CD4-positive, alpha-beta memory T cell (primary cell): ENCODE measurements at regions of chr22 and their contacts with region 1.

Region 1: DNA sequence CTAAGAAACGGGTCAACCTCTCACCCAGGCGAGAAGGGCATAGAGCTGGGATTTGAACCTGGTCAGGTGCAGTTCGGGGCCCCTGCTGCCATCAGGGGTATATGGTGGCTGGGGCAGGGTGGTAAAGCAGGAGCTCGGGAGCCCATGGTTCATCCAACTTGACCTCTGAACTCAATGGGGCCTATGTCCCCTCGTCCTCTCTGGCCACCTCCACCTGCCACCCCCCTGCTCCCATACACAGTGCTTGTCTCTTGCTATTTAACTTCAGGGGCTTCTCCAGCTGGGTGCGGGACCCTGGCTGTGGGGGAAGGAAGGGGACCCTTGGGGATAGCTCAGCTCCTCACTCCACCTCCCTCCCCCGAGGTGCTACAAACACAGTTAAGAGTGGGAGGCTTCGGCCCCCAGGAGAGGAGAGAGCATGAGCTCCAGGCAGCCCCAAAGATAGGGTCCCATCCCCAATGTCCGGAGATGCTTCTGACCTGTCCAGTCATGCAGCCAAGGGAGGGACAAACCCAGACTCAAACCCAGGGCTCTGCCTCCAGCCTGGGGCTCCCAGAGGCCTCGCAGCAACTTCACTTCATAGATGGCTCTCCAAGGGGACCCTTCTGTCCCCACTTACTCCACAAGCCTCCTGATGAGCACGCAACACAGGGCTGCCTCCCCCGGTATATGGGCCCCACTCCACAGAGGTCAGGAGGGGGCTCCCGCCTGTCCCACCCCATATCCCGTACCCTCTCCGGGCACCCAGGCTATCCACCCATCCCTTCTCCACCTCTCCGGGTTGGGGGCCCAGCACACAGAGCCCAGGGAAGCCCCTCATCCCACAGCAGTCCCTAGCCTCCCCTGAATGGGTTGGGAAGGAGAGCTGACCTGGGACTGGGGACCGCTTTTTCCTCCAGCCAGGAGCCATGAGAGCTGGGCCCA is 712 bp downstream of the IL2RB start:
- DNase-seq: peak in 1 of 5 donors; percentile 44
- H3K4me3 ChIP-seq: peak overlapping the region; percentile 72
- H3K4me3 Mint-ChIP-seq: peak overlapping the region; percentile 88 to 96 (median 92)
- H3K27ac ChIP-seq: peak overlapping the region; percentile 95
- H3K27ac Mint-ChIP-seq: peak overlapping the region; percentile 96 to 100 (median 98)
- H3K4me1 ChIP-seq: peaks cover 63% of the 10 kb centered on the region
- H3K4me1 Mint-ChIP-seq: peaks cover 43 to 74% (median 58%) of the 10 kb centered on the region in 4 donors
- H3K27me3 ChIP-seq: no peaks in the 10 kb centered on the region
- H3K27me3 Mint-ChIP-seq: peaks cover 0 to 4% of the 10 kb centered on the region in 2 donors

Region 2: DNA sequence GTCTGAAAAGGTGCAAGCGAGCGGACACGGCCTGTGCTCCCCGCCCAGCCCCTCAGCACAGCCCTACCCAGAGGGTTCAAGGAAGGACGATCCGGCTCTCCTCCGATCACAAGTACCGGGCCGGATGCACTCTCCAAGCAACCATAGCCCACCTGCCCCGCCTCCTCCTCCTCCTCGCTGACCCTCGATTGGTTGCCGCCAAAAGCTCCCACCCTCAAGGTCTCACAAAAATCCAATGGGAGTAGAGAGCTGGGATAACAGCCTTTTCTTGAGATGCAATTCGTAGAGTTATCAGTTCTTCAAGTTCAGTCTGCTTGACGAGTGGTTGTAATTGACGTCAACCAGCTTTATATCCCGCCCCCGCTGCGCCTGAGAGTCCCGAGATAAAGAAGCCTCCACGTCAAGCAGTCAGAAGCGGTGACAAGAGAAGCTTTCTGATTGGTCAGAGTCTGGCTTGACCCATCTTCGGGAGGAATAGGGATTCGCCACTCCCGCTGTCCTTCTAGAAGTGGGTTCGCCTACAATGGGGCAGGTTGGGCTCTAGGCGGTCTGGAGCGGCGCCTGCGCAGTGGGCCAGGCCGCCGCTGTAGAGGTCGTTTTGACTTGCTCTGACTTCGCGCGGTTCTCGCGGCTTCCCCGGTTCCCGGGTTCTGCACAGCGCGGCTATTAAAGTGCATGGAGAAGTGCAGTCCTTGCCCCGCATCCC is 372.9 kb before region 1 on chr22 and contains the start of gene IFT27:
- CTCF ChIA-PET with region 1: no interaction called
- POLR2A ChIA-PET with region 1: interaction called, 20 read pairs
- intact Hi-C with region 1: no loop called
- DNase-seq: peak; percentile 96 to 100 (median 99)
- H3K4me3 ChIP-seq: peak within 1 kb of the TSS; percentile 51 to 64
- H3K4me3 Mint-ChIP-seq: peak within 1 kb of the TSS; percentile 89 to 97 (median 92)
- H3K27ac ChIP-seq: peak within 1 kb of the TSS; percentile 73
- H3K27ac Mint-ChIP-seq: peak within 1 kb of the TSS; percentile 93 to 99 (median 98)
- H3K4me1 ChIP-seq: peaks cover 17% of the 10 kb centered on the region
- H3K4me1 Mint-ChIP-seq: peaks cover 16 to 32% (median 24%) of the 10 kb centered on the region in 4 donors
- H3K27me3 ChIP-seq: no peaks in the 10 kb centered on the region
- H3K27me3 Mint-ChIP-seq: no peaks in the 10 kb centered on the region
- total RNA-seq, gene IFT27: 38.2 to 42.6 TPM

Region 3: GRCh38 chr22:37098976-37099591 is 49.9 kb before region 1 on chr22:
- CTCF ChIA-PET with region 1: no interaction called
- POLR2A ChIA-PET with region 1: no interaction called
- intact Hi-C with region 1: loop called (anchors 1 kb)
- DNase-seq: no peak
- H3K4me3 ChIP-seq: no peak overlapping the region
- H3K4me3 Mint-ChIP-seq: no peak overlapping the region
- H3K27ac ChIP-seq: no peak overlapping the region
- H3K27ac Mint-ChIP-seq: peak overlapping the region in 3 of 7 donors; percentile 50 to 73 (median 61)
- H3K4me1 ChIP-seq: no peaks in the 10 kb centered on the region
- H3K4me1 Mint-ChIP-seq: peaks cover 8 to 12% (median 10%) of the 10 kb centered on the region in 4 donors
- H3K27me3 ChIP-seq: no peaks in the 10 kb centered on the region
- H3K27me3 Mint-ChIP-seq: peaks cover 7 to 8% of the 10 kb centered on the region in 2 donors

Region 4: DNA sequence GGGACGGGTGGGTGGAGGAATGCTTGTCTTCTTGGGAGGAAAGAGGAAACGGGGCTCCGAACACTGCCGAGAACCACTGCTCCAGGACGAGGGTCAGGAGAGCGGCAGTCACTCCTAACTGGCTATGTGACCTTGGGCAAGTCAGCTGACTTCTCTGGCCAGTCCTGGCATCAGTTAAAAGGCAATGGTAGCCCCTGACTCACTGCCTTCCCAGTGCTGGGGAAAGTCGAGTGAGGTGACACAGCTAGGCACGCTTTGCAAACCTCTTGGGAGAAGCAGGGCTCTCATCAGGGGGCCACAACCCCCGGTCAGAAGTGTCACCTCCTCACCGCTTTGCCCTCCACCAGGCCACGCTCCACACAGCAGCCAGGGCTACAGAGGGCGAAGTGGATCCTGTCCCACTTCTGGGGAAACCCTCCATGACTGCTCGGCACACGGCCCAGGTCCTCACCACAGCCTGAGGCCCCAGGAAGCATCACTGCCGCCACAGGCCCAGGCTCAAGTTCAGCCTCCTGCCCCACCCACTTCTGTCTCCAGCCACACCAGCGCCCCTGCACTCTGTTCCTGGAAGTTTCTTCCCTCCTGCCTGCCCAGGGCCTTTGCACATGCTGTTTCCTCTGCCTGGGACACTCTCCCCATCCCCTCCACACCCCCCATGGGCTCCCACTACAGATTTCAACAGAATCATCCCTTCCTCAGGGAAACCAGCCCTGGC is 15.5 kb before region 1 on chr22:
- CTCF ChIA-PET with region 1: interaction called, 3 read pairs
- POLR2A ChIA-PET with region 1: interaction called, 13 read pairs
- intact Hi-C with region 1: no loop called
- DNase-seq: no peak
- H3K4me3 ChIP-seq: no peak overlapping the region
- H3K4me3 Mint-ChIP-seq: no peak overlapping the region
- H3K27ac ChIP-seq: peak overlapping the region; percentile 1
- H3K27ac Mint-ChIP-seq: peak overlapping the region in 6 of 7 donors; percentile 48 to 87 (median 77)
- H3K4me1 ChIP-seq: no peaks in the 10 kb centered on the region
- H3K4me1 Mint-ChIP-seq: peaks cover 0 to 13% (median 6%) of the 10 kb centered on the region in 4 donors
- H3K27me3 ChIP-seq: no peaks in the 10 kb centered on the region
- H3K27me3 Mint-ChIP-seq: no peaks in the 10 kb centered on the region

Region 5: DNA sequence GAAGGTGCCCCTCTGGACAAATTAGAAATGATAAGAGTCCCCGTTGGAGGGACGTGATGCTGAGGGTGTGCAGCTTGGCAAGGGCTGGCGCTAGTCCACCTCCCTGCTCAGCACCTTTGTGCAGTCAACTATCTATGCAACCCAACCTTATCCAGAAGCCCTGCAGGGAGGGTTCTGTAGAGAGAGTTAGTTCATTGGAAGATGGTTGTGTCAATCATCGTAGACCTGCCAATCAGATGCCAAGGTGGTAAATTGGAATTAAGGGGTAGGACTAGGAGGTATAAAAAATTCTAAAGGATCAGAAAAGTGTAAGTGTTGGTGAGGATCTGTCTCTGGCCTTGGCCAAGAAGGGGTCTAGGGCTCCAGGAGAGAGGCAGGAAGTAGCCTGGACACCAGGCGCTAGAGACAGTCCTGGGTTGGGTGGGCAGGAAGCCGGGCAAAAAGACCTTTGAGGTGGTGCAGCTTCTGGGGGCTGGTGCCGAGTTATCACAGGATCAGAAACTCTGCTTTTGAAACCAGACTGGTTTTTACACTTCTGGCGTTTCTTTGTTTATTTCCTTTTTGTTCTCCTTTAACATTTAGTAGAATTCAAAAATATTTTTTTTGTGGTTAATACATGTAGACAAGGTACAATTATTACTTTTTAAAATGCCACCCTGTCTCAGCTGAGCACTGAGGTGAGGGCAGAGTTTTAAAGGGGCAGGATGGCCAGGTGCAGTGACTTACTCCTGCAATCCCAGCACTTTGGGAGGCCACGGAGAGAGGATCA is 37.4 kb after region 1 on chr22:
- CTCF ChIA-PET with region 1: interaction called, 3 read pairs
- POLR2A ChIA-PET with region 1: interaction called, 15 read pairs
- intact Hi-C with region 1: no loop called
- DNase-seq: peak; percentile 68 to 79 (median 76)
- H3K4me3 ChIP-seq: peak overlapping the region in 1 of 2 donors; percentile 1
- H3K4me3 Mint-ChIP-seq: peak overlapping the region; percentile 74 to 87 (median 80)
- H3K27ac ChIP-seq: peak overlapping the region; percentile 31
- H3K27ac Mint-ChIP-seq: peak overlapping the region; percentile 73 to 95 (median 85)
- H3K4me1 ChIP-seq: peaks cover 61% of the 10 kb centered on the region
- H3K4me1 Mint-ChIP-seq: peaks cover 24 to 56% (median 40%) of the 10 kb centered on the region in 4 donors
- H3K27me3 ChIP-seq: no peaks in the 10 kb centered on the region
- H3K27me3 Mint-ChIP-seq: no peaks in the 10 kb centered on the region

Region 6: DNA sequence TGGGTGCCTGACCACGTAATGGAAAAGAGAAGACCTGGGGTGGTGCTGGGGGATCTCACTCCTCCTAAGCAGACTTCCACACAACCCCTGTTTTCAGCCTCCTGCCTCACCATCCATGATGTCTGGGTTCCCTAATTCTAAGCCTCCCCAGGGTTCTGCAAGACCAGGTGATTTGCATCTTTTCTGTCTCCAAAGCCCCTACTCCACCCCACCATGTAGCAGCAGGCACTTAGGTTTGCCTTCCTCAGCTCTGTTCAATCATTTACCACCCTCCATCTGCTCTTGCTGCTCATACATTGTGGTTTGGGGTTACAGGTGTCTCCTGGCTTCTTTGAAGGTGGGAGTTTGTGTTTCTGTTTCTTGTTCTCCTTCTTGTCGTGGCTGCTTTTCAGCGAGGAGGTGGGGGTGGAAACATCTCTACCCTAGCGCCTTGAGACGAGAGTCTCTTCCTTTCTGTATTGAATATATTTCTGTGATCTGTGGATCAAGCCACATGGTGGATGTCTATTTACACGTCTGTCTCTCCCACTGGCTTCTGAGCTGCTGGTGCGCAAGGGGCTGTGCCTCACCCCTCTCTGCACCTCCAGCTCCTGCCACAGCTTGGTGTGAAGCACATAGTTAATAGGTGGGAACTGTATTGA is 69.9 kb after region 1 on chr22:
- CTCF ChIA-PET with region 1: no interaction called
- POLR2A ChIA-PET with region 1: interaction called, 11 read pairs
- intact Hi-C with region 1: no loop called
- DNase-seq: peak; percentile 86 to 96 (median 91)
- H3K4me3 ChIP-seq: peak overlapping the region; percentile 15 to 51
- H3K4me3 Mint-ChIP-seq: peak overlapping the region; percentile 67 to 90 (median 84)
- H3K27ac ChIP-seq: peak overlapping the region; percentile 58
- H3K27ac Mint-ChIP-seq: peak overlapping the region; percentile 87 to 98 (median 95)
- H3K4me1 ChIP-seq: peaks cover 73% of the 10 kb centered on the region
- H3K4me1 Mint-ChIP-seq: peaks cover 58 to 79% (median 64%) of the 10 kb centered on the region in 4 donors
- H3K27me3 ChIP-seq: no peaks in the 10 kb centered on the region
- H3K27me3 Mint-ChIP-seq: no peaks in the 10 kb centered on the region